Activated T-helper 2 cell treated with anti-CD3 and anti-CD28 coated beads, Interferon-gamma antibody, Interleukin-2, Interleukin-4, amounts not matched to agents 10 μg/mL and 5 μg/mL and 100 μg/mL, durations not matched to agents 14 hours and 24 hours and 36 hours (primary cell): ENCODE measurements at regions of chr1 and their contacts with region 1.

Region 1: DNA sequence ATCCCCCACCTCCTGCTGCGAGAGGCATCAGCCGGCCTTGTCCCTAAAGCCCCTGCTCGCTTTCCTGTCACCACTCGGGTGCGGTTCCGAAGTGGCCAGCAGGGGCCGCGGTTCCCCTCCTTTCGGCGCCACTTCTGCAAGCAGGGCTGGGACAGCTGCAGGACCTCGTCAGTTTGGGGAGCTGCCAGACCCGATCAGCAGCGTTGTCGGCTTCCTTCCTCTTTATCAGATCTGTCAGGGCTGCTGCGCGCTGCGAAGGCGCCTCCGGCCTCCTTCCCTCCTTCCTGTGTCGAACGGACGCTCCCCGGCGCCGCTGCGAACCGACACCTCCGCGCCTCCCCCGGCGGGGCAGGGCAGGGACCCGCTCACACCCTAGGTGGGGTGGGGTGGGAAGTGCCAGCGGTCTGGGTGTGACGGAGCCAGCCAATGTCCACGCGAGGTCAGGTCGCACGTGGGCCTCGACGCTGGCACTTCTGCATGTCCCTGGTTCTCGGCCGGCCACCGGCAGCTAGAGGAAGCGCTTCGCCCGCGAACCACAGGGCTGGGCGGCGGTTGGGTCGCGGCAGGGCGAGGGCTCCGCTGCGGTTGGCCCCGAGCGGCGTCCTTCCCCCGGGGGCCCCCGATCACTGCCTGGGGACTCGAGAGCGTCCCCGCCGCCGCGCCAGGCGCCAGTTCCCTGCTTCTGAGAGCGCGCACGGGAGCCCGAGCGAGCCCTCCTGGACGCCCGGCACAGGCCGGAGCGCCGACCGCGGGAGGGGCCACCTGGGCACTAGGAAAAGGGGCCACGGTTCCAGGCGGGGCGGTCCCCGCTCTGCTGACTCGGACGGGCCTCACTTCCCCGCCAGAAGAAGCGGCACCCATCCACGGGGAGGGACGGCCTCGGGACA is 81.8 kb downstream of the RUNX3 start:
- DNase-seq: peak; percentile 87
- H3K4me3 Mint-ChIP-seq: peak overlapping the region; percentile 66
- H3K27ac Mint-ChIP-seq: no peak overlapping the region
- H3K4me1 Mint-ChIP-seq: peaks cover 16% of the 10 kb centered on the region
- H3K27me3 Mint-ChIP-seq: peaks cover 29% of the 10 kb centered on the region

Region 2: GRCh38 chr1:24619376-24619775 is 228.9 kb before region 1 on chr1:
- intact Hi-C with region 1: no loop called
- DNase-seq: no peak
- H3K4me3 Mint-ChIP-seq: no peak overlapping the region
- H3K27ac Mint-ChIP-seq: no peak overlapping the region
- H3K4me1 Mint-ChIP-seq: no peaks in the 10 kb centered on the region
- H3K27me3 Mint-ChIP-seq: peaks cover 49% of the 10 kb centered on the region

Region 3: DNA sequence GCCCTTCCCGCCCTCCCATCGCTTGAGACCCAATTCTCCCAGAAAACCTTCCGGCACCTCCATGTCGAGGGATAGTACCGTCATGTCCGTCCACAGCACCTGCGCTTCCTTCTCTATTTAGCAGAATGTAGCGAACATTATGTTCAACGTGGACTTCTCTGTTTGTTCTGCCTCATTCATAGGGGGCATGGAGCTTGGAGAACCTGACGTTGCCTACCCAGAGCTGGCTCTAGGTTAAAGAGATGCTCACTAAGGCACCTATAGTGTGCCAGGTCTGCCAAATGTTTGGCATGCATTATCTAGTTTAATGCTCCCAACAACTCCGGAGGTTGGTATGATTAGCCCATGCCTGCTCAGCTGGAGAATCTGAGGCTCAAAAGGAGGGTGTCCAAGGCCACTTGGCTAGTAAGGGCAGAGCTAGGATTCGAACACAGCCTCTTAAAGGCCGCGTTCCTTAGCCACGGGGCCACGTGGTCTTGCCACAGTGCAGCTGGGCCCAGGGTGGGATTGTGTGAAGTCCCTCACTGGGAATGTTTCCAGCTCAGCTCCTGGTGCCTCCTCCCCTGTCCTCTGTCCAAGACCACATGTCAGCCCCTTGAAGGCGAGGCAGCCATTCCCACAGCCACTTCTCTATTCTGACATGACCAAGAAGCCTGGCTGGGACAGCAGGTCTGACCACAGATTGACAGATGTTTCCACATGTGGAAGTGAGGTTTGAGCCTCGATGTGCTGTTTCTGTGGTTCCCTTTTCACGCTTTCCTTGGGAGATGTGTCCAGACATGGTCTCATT is 24.0 kb after region 1 on chr1:
- intact Hi-C with region 1: no loop called
- DNase-seq: no peak
- H3K4me3 Mint-ChIP-seq: no peak overlapping the region
- H3K27ac Mint-ChIP-seq: no peak overlapping the region
- H3K4me1 Mint-ChIP-seq: peaks cover 3% of the 10 kb centered on the region
- H3K27me3 Mint-ChIP-seq: peaks cover 13% of the 10 kb centered on the region

Region 4: DNA sequence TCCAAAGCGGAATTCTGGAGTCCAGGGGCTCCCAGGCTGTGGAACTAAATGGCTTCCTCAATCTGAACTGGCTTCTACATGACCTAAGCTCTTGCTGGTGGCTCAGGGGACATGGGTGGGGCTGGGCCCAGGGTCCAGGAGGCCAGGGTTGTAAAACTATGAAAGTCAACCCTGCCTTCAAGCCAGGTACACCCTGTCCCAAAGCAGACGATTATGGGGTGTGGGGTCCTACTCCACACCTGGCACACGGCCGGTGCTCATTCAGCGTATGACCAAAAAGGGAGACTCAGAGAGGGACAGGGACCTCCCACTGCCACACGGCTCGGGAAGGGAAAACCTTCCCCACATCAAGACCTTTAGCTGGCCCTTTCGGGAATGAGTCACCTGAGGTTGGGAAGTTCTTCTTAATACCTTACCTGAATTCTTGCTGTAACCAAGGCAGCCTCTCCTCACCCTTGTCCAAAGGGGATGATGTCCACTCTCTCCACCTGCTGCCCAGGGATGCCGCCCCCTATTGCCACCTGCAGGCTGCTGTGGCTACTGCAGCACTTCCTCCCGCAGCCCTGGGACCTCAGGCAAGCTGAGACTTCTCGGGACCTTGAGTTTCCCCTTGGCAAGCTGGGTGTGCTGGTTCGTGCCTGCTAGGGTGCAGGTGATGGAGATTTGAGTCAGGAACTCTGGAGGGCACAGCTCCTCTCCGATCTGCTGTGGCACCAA is 49.7 kb after region 1 on chr1:
- intact Hi-C with region 1: loop called (anchors 5 kb)
- DNase-seq: peak; percentile 28
- H3K4me3 Mint-ChIP-seq: no peak overlapping the region
- H3K27ac Mint-ChIP-seq: no peak overlapping the region
- H3K4me1 Mint-ChIP-seq: peaks cover 10% of the 10 kb centered on the region
- H3K27me3 Mint-ChIP-seq: no peaks in the 10 kb centered on the region

Region 5: GRCh38 chr1:24919791-24920532 is 71.7 kb after region 1 on chr1:
- intact Hi-C with region 1: loop called (anchors 2 kb)
- DNase-seq: peak; percentile 32
- H3K4me3 Mint-ChIP-seq: no peak overlapping the region
- H3K27ac Mint-ChIP-seq: peak overlapping the region; percentile 94
- H3K4me1 Mint-ChIP-seq: peaks cover 40% of the 10 kb centered on the region
- H3K27me3 Mint-ChIP-seq: no peaks in the 10 kb centered on the region

Region 6: GRCh38 chr1:25037174-25038074 is 189.2 kb after region 1 on chr1:
- intact Hi-C with region 1: loop called (anchors 1 kb)
- DNase-seq: peak; percentile 43
- H3K4me3 Mint-ChIP-seq: no peak overlapping the region
- H3K27ac Mint-ChIP-seq: peak overlapping the region; percentile 0
- H3K4me1 Mint-ChIP-seq: peaks cover 36% of the 10 kb centered on the region
- H3K27me3 Mint-ChIP-seq: peaks cover 10% of the 10 kb centered on the region

Region 7: DNA sequence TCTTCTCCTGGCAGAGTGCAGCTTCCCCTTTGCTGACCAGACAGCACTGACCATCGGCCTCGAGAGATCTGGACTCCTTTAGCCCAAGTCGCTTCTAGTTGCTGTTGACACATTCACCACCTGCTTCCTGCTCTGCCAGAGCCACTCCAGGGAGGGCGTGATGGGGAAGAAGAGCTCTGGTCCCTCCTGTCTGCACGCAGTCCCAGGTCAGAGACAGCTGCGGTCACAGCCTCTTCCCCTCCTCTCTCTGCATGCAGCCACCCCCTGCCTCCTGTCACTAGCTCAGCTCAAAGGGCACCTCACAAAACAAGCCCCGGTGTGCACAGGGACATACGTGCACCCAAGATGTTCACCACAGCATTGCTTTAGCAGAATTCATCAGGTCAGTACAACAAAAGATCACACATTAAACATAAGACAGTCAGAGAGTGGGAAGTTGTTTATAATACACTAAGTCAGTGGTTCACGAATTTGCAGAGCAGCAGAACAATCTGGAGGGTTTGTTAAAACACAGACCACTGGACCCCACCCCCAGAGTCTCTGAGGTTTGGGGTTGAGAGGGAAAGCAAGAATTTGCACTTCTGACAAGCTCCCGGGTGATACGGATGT is 251.2 kb after region 1 on chr1:
- intact Hi-C with region 1: loop called (anchors 1 kb)
- DNase-seq: peak; percentile 36
- H3K4me3 Mint-ChIP-seq: peak overlapping the region; percentile 68
- H3K27ac Mint-ChIP-seq: peak overlapping the region; percentile 67
- H3K4me1 Mint-ChIP-seq: peaks cover 66% of the 10 kb centered on the region
- H3K27me3 Mint-ChIP-seq: peaks cover 5% of the 10 kb centered on the region

Region 8: DNA sequence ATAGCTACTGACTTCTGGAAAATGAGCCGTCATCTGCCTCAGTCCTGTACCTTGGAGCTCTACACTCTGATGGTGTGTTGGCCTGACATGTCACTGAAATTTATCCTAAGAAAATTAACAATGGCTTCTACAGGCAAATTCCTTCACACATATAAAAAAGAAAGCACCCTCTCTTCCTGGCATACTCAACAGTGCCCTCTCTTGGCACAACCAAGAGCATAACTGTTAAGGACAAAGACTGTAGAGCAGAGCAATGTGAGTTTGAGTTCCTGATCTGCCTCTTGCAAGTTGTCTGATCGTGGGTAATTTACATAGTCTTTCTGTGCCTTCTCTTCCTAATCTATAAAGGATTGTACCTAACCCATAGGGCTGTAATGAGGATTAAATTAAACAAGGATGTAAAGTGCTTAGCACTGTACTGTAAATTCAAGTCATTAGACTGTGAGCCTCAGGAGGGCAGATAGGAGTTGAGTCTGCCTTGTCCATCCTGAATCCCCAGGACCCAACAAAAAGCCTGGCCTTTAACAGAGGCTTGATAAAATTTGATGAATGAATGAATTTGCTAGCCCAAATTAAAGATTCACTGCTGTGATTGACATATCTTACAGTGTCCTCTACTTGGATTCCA is 300.5 kb after region 1 on chr1:
- intact Hi-C with region 1: loop called (anchors 2 kb)
- DNase-seq: no peak
- H3K4me3 Mint-ChIP-seq: no peak overlapping the region
- H3K27ac Mint-ChIP-seq: no peak overlapping the region
- H3K4me1 Mint-ChIP-seq: peaks cover 4% of the 10 kb centered on the region
- H3K27me3 Mint-ChIP-seq: peaks cover 39% of the 10 kb centered on the region

Region 9: GRCh38 chr1:25204797-25205480 is 356.7 kb after region 1 on chr1:
- intact Hi-C with region 1: loop called (anchors 1 kb)
- DNase-seq: no peak
- H3K4me3 Mint-ChIP-seq: no peak overlapping the region
- H3K27ac Mint-ChIP-seq: no peak overlapping the region
- H3K4me1 Mint-ChIP-seq: no peaks in the 10 kb centered on the region
- H3K27me3 Mint-ChIP-seq: peaks cover 24% of the 10 kb centered on the region